ENCODE measurements at regions of chr6 and their contacts with region 1.

Region 1: GRCh38 chr6:56288347-56288746 is 41.0 kb upstream of the COL21A1 start:
- DNase-seq: no peak
- H3K4me3 ChIP-seq: no peak overlapping the region
- H3K27ac ChIP-seq: no peak overlapping the region
- H3K4me1 ChIP-seq: no peaks in the 10 kb centered on the region
- H3K27me3 ChIP-seq: no peaks in the 10 kb centered on the region
- CTCF ChIP-seq: no peak

Region 2: DNA sequence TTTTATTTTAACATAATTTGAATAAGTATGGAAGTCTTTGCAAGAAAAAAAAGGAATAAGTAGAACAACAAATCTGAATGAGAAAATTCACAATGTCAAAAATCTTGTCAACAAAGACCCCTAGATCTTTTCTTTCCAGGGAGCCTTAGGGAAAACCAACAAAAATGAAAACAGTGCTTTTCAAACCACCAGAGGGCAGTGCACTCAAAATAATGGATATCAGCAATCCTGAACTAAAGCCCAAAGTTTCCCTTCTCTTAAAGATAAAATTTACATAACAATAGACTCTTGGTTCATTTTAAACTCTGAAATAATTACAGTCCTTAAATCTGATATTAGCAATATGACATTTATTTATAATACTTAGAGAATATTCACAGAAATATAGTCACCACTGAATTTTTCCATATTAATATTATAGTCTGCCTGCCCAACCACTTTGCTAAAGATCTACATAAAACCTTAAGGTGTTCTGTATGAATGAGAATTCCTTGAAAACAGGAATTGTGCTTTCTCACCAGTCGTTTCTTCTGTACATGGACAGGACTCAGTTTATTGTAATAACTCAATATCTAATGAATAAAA is 307.6 kb before region 1 on chr6:
- intact Hi-C with region 1: loop called (anchors 5 kb)
- DNase-seq: peak in 2 of 5 donors; percentile 61 to 80
- H3K4me3 ChIP-seq: no peak overlapping the region
- H3K27ac ChIP-seq: no peak overlapping the region
- H3K4me1 ChIP-seq: no peaks in the 10 kb centered on the region
- H3K27me3 ChIP-seq: no peaks in the 10 kb centered on the region
- CTCF ChIP-seq: peak; percentile 53

Region 3: GRCh38 chr6:56424542-56425083 is 136.3 kb after region 1 on chr6:
- intact Hi-C with region 1: no loop called
- DNase-seq: peak in 1 of 5 donors; percentile 20
- H3K4me3 ChIP-seq: no peak overlapping the region
- H3K27ac ChIP-seq: no peak overlapping the region
- H3K4me1 ChIP-seq: no peaks in the 10 kb centered on the region
- H3K27me3 ChIP-seq: no peaks in the 10 kb centered on the region
- CTCF ChIP-seq: no peak